AG04450 (cell line): ENCODE measurements at regions of chr9 and their contacts with region 1.

Region 1: GRCh38 chr9:2132484-2133082 is 117.4 kb downstream of the SMARCA2 start:
- DNase-seq: no peak
- H3K4me3 ChIP-seq: no peak overlapping the region
- H3K27ac ChIP-seq: no peak overlapping the region
- H3K27me3 ChIP-seq: no peaks in the 10 kb centered on the region
- CTCF ChIP-seq: peak; percentile 80

Region 2: GRCh38 chr9:2158111-2158610 is 25.6 kb after region 1 on chr9:
- CTCF ChIA-PET with region 1: interaction called, 22 read pairs
- POLR2A ChIA-PET with region 1: no interaction called
- DNase-seq: no peak
- H3K4me3 ChIP-seq: peak overlapping the region; percentile 64
- H3K27ac ChIP-seq: peak overlapping the region; percentile 76
- H3K27me3 ChIP-seq: no peaks in the 10 kb centered on the region
- CTCF ChIP-seq: 0 out of 2 replicates have a peak, but pooled peaks have one; percentile 22